ENCODE measurements at regions of chr3 and their contacts with region 1.

Region 1: DNA sequence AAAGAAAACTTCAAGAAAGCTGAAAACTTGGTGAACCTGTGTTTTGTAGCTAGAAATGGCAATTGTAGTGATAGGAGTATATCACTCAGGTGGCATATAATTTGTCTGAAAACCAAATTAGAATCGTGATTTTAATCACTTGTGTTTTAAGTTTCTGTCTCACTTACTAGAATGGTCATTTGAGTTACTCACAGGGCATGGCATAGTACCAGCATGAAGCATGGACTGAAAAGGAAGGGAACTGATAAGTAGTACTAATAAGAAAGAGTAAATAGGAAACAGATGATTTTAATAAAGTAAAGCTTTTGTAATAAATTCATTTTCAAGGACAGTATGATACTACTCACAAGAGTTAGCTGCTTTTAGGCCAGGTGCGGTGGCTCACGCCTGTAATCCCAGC is 22.1 kb downstream of the OSBPL11 start:
- H3K4me3 Mint-ChIP-seq: no peak overlapping the region
- H3K27ac Mint-ChIP-seq: no peak overlapping the region
- H3K4me1 Mint-ChIP-seq: no peaks in the 10 kb centered on the region
- H3K27me3 Mint-ChIP-seq: no peaks in the 10 kb centered on the region

Region 2: DNA sequence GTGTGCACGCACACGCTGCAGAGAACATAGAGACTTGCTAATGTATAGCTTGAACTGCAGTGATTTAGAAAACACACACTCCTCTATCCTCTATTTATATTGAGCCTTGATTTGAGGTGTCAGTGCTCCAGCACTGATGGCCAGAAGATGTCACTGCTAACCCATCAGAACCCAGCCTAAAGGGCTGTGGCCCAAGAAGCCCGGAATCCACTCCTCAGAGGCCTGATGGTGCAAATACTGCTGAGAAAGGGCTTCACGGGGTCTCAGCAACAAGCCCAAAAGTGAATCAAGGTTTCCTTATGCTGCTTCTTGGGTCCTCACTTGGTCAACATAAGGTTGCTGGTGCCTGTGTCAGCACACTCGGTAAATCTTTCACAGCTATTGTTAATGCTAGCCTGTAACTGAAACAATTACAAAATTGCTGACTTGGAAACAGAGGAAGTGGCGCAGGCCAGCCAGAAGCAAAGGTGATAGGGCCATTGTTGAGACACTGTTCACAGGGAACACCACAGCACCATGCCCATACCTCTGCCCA is 577.7 kb before region 1 on chr3:
- intact Hi-C with region 1: no loop called
- H3K4me3 Mint-ChIP-seq: no peak overlapping the region
- H3K27ac Mint-ChIP-seq: peak overlapping the region; percentile 70
- H3K4me1 Mint-ChIP-seq: peaks cover 19% of the 10 kb centered on the region
- H3K27me3 Mint-ChIP-seq: no peaks in the 10 kb centered on the region

Region 3: GRCh38 chr3:125310623-125311081 is 262.6 kb before region 1 on chr3:
- intact Hi-C with region 1: no loop called
- H3K4me3 Mint-ChIP-seq: peak overlapping the region; percentile 78
- H3K27ac Mint-ChIP-seq: peak overlapping the region; percentile 81
- H3K4me1 Mint-ChIP-seq: peaks cover 25% of the 10 kb centered on the region
- H3K27me3 Mint-ChIP-seq: no peaks in the 10 kb centered on the region

Region 4: DNA sequence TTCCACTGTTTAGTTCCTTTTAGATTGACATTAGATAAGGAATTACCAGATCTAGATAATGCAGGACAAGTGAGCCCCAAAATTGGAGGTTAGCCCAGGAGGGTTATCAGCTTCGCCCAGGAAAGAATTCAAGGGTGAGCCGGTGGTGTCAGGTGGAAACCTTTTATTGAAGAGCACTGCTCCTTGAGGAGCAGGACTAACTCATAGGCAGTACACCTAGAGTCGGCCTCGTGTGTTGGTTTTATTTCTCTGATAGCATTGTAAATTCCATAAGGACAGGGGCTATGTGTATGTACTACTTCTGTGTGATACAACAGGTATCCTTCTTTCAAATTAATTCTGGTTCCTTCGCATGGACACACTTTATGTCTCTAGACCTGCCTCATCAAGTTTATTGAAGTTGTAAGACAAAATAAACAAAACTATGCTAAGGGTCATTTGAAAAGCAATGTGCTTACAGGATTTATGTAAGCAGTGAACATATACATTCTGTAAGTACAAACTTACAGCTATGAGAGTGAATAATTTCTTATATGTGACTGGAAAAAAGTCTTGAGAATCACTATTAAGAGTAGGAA is 110.4 kb before region 1 on chr3:
- intact Hi-C with region 1: loop called (anchors 10 kb)
- H3K4me3 Mint-ChIP-seq: no peak overlapping the region
- H3K27ac Mint-ChIP-seq: no peak overlapping the region
- H3K4me1 Mint-ChIP-seq: no peaks in the 10 kb centered on the region
- H3K27me3 Mint-ChIP-seq: no peaks in the 10 kb centered on the region

Region 5: DNA sequence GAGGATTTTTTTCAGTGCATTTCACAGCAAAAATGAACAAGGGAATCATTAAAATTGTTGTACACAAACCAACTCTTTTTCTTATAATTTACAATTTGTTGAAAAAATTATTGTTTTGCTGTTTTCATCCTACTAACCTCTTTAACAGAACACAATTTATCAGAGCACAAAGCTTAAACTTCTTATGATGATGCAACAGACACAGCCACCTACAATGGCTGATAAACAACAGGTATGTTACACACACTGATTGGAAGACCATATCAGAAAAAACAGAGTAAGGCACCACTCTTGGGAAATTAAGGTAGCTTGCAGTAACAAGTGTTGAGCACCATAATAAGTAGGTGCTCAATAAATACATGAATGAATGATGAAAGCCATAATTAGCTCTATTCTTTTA is 44.3 kb before region 1 on chr3:
- intact Hi-C with region 1: no loop called
- H3K4me3 Mint-ChIP-seq: no peak overlapping the region
- H3K27ac Mint-ChIP-seq: no peak overlapping the region
- H3K4me1 Mint-ChIP-seq: peaks cover 5% of the 10 kb centered on the region
- H3K27me3 Mint-ChIP-seq: no peaks in the 10 kb centered on the region